ENCODE measurements at regions of chr11 and their contacts with region 1.

Region 1: GRCh38 chr11:41612415-41612814 is 153.0 kb upstream of the LRRC4C start:
- DNase-seq: peak in 1 of 2 experiments; percentile 2
- H3K4me3 ChIP-seq: no peak overlapping the region
- H3K4me3 Mint-ChIP-seq: no peak overlapping the region
- H3K27ac Mint-ChIP-seq: no peak overlapping the region
- H3K4me1 ChIP-seq: no peaks in the 10 kb centered on the region
- H3K4me1 Mint-ChIP-seq: no peaks in the 10 kb centered on the region
- H3K27me3 ChIP-seq: no peaks in the 10 kb centered on the region
- H3K27me3 Mint-ChIP-seq: no peaks in the 10 kb centered on the region
- CTCF ChIP-seq: no peak

Region 2: GRCh38 chr11:41346042-41346441 is 266.4 kb before region 1 on chr11:
- CTCF ChIA-PET with region 1: no interaction called
- POLR2A ChIA-PET with region 1: no interaction called
- intact Hi-C with region 1: no loop called
- DNase-seq: no peak
- H3K4me3 ChIP-seq: no peak overlapping the region
- H3K4me3 Mint-ChIP-seq: no peak overlapping the region
- H3K27ac Mint-ChIP-seq: no peak overlapping the region
- H3K4me1 ChIP-seq: no peaks in the 10 kb centered on the region
- H3K4me1 Mint-ChIP-seq: no peaks in the 10 kb centered on the region
- H3K27me3 ChIP-seq: no peaks in the 10 kb centered on the region
- H3K27me3 Mint-ChIP-seq: no peaks in the 10 kb centered on the region
- CTCF ChIP-seq: no peak

Region 3: DNA sequence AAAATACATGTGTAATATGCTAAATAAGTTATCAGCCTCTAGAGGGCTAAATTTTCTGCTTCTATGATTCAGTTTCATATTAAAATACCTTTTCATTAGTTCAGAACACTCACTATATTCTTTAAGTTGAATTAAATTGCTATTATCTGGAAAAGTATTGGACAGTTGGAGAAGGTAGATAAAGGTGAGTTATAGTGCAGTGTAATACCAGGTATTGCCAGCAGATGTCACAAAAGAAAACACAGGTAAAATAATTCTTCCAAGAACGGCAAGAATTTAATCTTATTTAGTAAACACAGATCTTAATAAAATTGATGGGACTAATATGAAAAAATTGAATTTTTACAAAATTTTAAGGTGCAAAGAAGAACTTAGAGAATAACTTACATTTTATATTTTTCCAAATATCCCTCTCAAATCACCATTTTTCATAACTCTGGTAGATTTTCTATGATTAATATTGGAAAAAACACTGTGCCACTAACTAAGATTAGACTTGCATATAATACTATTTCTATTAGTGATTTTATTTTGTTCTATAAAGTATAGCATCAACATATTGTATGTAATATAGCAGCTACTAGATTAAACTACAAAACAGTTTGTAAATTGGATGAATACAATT is 151.2 kb before region 1 on chr11:
- CTCF ChIA-PET with region 1: no interaction called
- POLR2A ChIA-PET with region 1: no interaction called
- intact Hi-C with region 1: loop called (anchors 1 kb)
- DNase-seq: peak in 1 of 2 experiments; percentile 28
- H3K4me3 ChIP-seq: no peak overlapping the region
- H3K4me3 Mint-ChIP-seq: no peak overlapping the region
- H3K27ac Mint-ChIP-seq: no peak overlapping the region
- H3K4me1 ChIP-seq: no peaks in the 10 kb centered on the region
- H3K4me1 Mint-ChIP-seq: no peaks in the 10 kb centered on the region
- H3K27me3 ChIP-seq: no peaks in the 10 kb centered on the region
- H3K27me3 Mint-ChIP-seq: peaks cover 5% of the 10 kb centered on the region
- CTCF ChIP-seq: peak; percentile 62 to 81

Region 4: DNA sequence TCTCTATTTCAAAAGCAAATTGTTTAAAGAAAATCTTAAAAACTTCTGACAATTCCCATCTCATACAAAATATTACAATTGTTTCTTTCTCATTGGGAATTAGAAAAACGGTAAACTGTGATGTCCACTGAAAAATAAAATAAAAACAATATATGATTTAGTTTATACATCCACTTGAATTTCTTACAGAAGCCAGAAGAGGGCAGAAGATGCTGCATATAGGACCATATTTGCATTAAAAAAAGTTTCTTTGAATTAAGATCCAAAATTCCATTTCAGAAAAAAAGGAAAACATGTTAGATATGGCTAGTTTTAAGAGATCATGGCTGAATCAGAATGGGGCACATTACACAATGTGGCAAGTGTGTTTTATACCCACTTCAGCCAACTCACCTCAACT is 113.7 kb before region 1 on chr11:
- CTCF ChIA-PET with region 1: no interaction called
- POLR2A ChIA-PET with region 1: no interaction called
- intact Hi-C with region 1: loop called (anchors 1 kb)
- DNase-seq: no peak
- H3K4me3 ChIP-seq: no peak overlapping the region
- H3K4me3 Mint-ChIP-seq: no peak overlapping the region
- H3K27ac Mint-ChIP-seq: no peak overlapping the region
- H3K4me1 ChIP-seq: peaks cover 7% of the 10 kb centered on the region
- H3K4me1 Mint-ChIP-seq: peaks cover 8% of the 10 kb centered on the region
- H3K27me3 ChIP-seq: no peaks in the 10 kb centered on the region
- H3K27me3 Mint-ChIP-seq: no peaks in the 10 kb centered on the region
- CTCF ChIP-seq: peak; percentile 25 to 40

Region 5: GRCh38 chr11:41775296-41775695 is 162.9 kb after region 1 on chr11:
- CTCF ChIA-PET with region 1: no interaction called
- POLR2A ChIA-PET with region 1: no interaction called
- intact Hi-C with region 1: no loop called
- DNase-seq: no peak
- H3K4me3 ChIP-seq: no peak overlapping the region
- H3K4me3 Mint-ChIP-seq: no peak overlapping the region
- H3K27ac Mint-ChIP-seq: no peak overlapping the region
- H3K4me1 ChIP-seq: no peaks in the 10 kb centered on the region
- H3K4me1 Mint-ChIP-seq: no peaks in the 10 kb centered on the region
- H3K27me3 ChIP-seq: no peaks in the 10 kb centered on the region
- H3K27me3 Mint-ChIP-seq: no peaks in the 10 kb centered on the region
- CTCF ChIP-seq: no peak

Region 6: GRCh38 chr11:41921746-41922390 is 309.5 kb after region 1 on chr11:
- CTCF ChIA-PET with region 1: no interaction called
- POLR2A ChIA-PET with region 1: no interaction called
- intact Hi-C with region 1: no loop called
- DNase-seq: no peak
- H3K4me3 ChIP-seq: no peak overlapping the region
- H3K4me3 Mint-ChIP-seq: no peak overlapping the region
- H3K27ac Mint-ChIP-seq: no peak overlapping the region
- H3K4me1 ChIP-seq: no peaks in the 10 kb centered on the region
- H3K4me1 Mint-ChIP-seq: no peaks in the 10 kb centered on the region
- H3K27me3 ChIP-seq: no peaks in the 10 kb centered on the region
- H3K27me3 Mint-ChIP-seq: peaks cover under 1% of the 10 kb centered on the region
- CTCF ChIP-seq: no peak